Heart right ventricle (tissue), 16 donors: ENCODE measurements at regions of chr12 and their contacts with region 1.

Region 1: DNA sequence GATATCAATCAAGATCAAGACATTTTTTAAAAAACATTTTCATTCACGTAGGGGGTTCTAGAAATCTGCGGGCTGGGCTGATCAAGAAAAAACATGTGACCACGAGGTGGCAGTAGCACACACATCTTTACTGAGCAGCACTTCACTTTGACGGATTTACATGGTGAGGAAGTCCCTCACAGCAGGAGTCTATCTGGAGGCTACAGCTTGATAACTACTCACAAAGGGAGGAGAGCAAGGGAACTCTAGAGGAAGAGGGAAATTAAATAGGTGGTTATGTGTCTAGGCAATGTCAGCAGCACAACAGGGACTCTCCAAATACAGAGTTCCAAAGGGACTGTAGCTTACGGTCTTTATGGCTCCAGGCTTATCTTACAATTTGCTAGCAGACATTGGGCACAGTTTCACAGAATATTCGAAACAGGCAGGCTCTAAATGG is 248.1 kb downstream of the DPY19L2 start:
- DNase-seq: peak in 1 of 2 donors; percentile 12
- ATAC-seq: peak in 5 of 8 donors; percentile 38 to 62 (median 44)
- H3K4me3 ChIP-seq: no peak overlapping the region
- H3K27ac ChIP-seq: no peak overlapping the region
- H3K4me1 ChIP-seq: no peaks in the 10 kb centered on the region
- H3K27me3 ChIP-seq: no peaks in the 10 kb centered on the region
- CTCF ChIP-seq: peak; percentile 26 to 64 (median 51)

Region 2: GRCh38 chr12:61487728-61488127 is 1932.5 kb before region 1 on chr12:
- intact Hi-C with region 1: loop called in 1 of 10 experiments (anchors 10 kb)
- DNase-seq: no peak
- ATAC-seq: no peak
- H3K4me3 ChIP-seq: no peak overlapping the region
- H3K27ac ChIP-seq: no peak overlapping the region
- H3K4me1 ChIP-seq: no peaks in the 10 kb centered on the region
- H3K27me3 ChIP-seq: no peaks in the 10 kb centered on the region
- CTCF ChIP-seq: no peak

Region 3: GRCh38 chr12:63149909-63150712 is 270.1 kb before region 1 on chr12:
- intact Hi-C with region 1: no loop called
- DNase-seq: peak; percentile 3 to 14
- ATAC-seq: peak in 5 of 8 donors; percentile 12 to 62 (median 13)
- H3K4me3 ChIP-seq: peak overlapping the region; percentile 22 to 60 (median 52)
- H3K27ac ChIP-seq: peak overlapping the region; percentile 5 to 68 (median 51)
- H3K4me1 ChIP-seq: peaks cover 0 to 31% (median 23%) of the 10 kb centered on the region in 9 donors
- H3K27me3 ChIP-seq: peaks cover 8 to 88% (median 55%) of the 10 kb centered on the region in 7 donors
- CTCF ChIP-seq: no peak

Region 4: DNA sequence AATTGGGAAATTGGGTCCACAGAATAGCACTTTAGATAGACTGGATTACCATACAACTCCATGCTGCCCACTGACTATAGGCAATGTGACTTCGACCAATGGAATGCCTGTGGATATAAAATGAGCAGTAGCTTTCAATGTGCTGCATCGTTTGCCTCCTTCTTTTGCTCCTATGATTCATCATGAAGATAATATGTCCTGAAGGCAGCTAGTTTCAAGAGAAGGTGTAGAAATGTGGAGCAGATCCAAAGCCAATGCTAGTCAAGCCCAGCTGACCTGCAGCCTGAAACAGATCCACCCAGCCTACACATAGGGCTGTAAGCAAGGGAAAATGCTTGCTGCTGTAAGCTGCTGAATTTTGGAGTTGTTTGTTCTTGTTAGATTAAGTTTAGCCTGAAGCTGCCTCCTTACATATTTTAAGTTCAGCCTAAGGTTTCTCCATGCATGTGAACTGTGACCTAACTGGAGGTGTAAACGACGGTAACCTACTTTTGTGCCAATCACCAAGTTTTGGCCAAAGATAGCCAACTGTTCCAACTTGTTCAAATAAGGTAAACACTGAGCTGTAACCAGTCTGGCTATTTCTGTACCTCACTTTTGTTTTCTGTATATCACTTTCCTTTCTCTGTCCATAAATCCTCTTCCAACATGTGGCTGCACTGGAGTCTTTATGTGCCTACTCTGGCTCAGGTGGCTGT is 100.1 kb before region 1 on chr12:
- intact Hi-C with region 1: loop called in 1 of 10 experiments (anchors 10 kb)
- DNase-seq: no peak
- ATAC-seq: no peak
- H3K4me3 ChIP-seq: no peak overlapping the region
- H3K27ac ChIP-seq: no peak overlapping the region
- H3K4me1 ChIP-seq: peaks cover 0 to 6% (median under 1%) of the 10 kb centered on the region in 9 donors
- H3K27me3 ChIP-seq: no peaks in the 10 kb centered on the region
- CTCF ChIP-seq: no peak

Region 5: DNA sequence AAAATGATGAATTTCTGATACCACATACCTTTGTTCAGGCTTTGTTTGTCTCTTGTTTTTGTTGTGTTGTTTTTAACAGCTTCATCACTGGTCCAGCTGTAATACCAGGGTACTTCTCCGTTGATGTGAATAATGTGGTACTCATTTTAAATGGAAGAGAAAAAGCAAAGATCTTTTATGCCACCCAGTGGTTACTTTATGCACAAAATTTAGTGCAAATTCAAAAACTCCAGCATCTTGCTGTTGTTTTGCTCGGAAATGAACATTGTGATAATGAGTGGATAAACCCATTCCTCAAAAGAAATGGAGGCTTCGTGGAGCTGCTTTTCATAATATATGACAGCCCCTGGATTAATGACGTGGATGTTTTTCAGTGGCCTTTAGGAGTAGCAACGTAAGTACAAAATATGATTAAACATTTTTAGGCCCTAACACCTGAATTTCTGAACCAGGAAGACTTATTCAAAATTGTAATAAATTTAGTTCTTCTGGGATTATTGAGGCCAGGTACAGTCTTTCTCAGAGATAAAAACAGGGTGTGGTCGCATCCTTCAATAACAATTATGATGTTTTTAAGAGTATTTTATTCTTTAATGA is 381.9 kb after region 1 on chr12:
- intact Hi-C with region 1: loop called in 2 of 10 experiments (anchors 10 kb)
- DNase-seq: no peak
- ATAC-seq: no peak
- H3K4me3 ChIP-seq: no peak overlapping the region
- H3K27ac ChIP-seq: no peak overlapping the region
- H3K4me1 ChIP-seq: no peaks in the 10 kb centered on the region
- H3K27me3 ChIP-seq: no peaks in the 10 kb centered on the region
- CTCF ChIP-seq: peak; percentile 27 to 72 (median 60)